CD14-positive monocyte (primary cell): ENCODE measurements at regions of chr12 and their contacts with region 1.

Region 1: DNA sequence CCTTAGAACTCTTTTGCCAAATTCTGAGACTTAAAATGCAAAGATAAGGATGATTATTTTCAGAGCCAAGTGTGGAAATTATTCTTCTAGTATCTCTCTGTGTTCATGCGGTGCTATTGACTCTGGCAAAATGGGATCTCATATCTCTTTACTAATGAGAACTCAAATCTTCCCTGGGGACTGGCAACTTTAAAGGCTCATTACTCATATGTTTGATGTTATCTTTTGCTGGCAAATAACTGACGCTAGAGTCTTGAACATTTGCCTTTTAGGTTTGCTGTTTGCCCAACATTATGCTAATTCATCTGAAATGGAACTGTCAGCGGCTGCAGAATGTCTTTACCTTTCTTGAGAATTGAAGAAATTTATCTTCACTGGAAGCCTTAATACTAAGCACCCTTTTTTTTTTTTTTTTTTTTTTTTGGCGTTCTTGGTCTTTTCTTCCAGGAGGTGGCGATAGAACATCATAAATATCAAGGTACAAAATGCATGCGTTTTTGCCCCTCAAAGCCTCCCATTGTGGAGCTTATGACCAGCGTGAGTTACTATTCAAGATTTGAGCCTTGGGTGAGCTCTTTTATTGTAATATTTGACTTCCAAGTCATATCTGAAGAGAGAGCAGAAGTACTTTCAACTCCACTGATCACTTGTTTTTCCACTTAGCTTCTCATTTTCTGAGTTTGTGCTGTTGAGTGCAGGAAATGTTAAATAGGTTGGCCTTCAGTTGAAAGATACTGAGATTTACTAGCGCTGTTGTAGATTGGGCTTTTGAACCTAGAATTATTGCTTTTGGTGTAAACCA is 86.6 kb downstream of the CAND1 start:
- DNase-seq: peak in 2 of 3 donors; percentile 2 to 4
- H3K4me3 ChIP-seq: no peak overlapping the region
- H3K4me3 Mint-ChIP-seq: no peak overlapping the region
- H3K27ac ChIP-seq: no peak overlapping the region
- H3K27ac Mint-ChIP-seq: no peak overlapping the region
- H3K4me1 ChIP-seq: no peaks in the 10 kb centered on the region
- H3K4me1 Mint-ChIP-seq: peaks cover 6% of the 10 kb centered on the region
- H3K27me3 ChIP-seq: peaks cover 0 to 2% of the 10 kb centered on the region in 2 donors
- H3K27me3 Mint-ChIP-seq: peaks cover 1 to 3% (median 2%) of the 10 kb centered on the region in 3 donors
- CTCF ChIP-seq: peak; percentile 68

Region 2: DNA sequence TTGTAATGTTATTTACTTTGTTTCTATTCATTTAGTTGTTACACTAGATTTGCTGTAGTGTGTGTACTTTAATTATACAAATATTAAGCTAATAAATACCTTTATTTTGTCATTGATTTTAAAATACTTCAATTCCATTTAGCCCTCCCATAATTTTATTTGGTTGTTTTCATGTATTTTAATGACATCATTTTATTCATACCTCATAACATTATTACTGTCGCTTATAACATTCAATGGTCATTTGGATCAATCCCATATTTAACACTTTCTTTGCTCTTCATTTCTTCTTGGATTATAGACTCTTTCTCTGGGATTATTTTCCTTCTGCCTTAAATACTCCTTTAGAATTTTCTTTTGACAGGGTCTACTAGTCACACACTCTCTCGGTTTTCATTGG is 173.2 kb before region 1 on chr12:
- intact Hi-C with region 1: no loop called
- DNase-seq: no peak
- H3K4me3 ChIP-seq: no peak overlapping the region
- H3K4me3 Mint-ChIP-seq: no peak overlapping the region
- H3K27ac ChIP-seq: no peak overlapping the region
- H3K27ac Mint-ChIP-seq: no peak overlapping the region
- H3K4me1 ChIP-seq: no peaks in the 10 kb centered on the region
- H3K4me1 Mint-ChIP-seq: no peaks in the 10 kb centered on the region
- H3K27me3 ChIP-seq: no peaks in the 10 kb centered on the region
- H3K27me3 Mint-ChIP-seq: peaks cover 0 to 4% (median 2%) of the 10 kb centered on the region in 3 donors
- CTCF ChIP-seq: no peak

Region 3: GRCh38 chr12:67208296-67209067 is 147.3 kb before region 1 on chr12:
- intact Hi-C with region 1: no loop called
- DNase-seq: no peak
- H3K4me3 ChIP-seq: no peak overlapping the region
- H3K4me3 Mint-ChIP-seq: no peak overlapping the region
- H3K27ac ChIP-seq: no peak overlapping the region
- H3K27ac Mint-ChIP-seq: no peak overlapping the region
- H3K4me1 ChIP-seq: no peaks in the 10 kb centered on the region
- H3K4me1 Mint-ChIP-seq: no peaks in the 10 kb centered on the region
- H3K27me3 ChIP-seq: no peaks in the 10 kb centered on the region
- H3K27me3 Mint-ChIP-seq: peaks cover 3 to 6% (median 3%) of the 10 kb centered on the region in 3 donors
- CTCF ChIP-seq: no peak

Region 4: GRCh38 chr12:67943226-67943892 is 587.6 kb after region 1 on chr12:
- intact Hi-C with region 1: loop called (anchors 5 kb)
- DNase-seq: peak; percentile 12 to 29 (median 26)
- H3K4me3 ChIP-seq: no peak overlapping the region
- H3K4me3 Mint-ChIP-seq: no peak overlapping the region
- H3K27ac ChIP-seq: no peak overlapping the region
- H3K27ac Mint-ChIP-seq: no peak overlapping the region
- H3K4me1 ChIP-seq: no peaks in the 10 kb centered on the region
- H3K4me1 Mint-ChIP-seq: no peaks in the 10 kb centered on the region
- H3K27me3 ChIP-seq: no peaks in the 10 kb centered on the region
- H3K27me3 Mint-ChIP-seq: peaks cover 0 to 8% (median 2%) of the 10 kb centered on the region in 3 donors
- CTCF ChIP-seq: peak; percentile 73